Testis (tissue), 5 donors: ENCODE measurements at regions of chr20 and their contacts with region 1.

Region 1: DNA sequence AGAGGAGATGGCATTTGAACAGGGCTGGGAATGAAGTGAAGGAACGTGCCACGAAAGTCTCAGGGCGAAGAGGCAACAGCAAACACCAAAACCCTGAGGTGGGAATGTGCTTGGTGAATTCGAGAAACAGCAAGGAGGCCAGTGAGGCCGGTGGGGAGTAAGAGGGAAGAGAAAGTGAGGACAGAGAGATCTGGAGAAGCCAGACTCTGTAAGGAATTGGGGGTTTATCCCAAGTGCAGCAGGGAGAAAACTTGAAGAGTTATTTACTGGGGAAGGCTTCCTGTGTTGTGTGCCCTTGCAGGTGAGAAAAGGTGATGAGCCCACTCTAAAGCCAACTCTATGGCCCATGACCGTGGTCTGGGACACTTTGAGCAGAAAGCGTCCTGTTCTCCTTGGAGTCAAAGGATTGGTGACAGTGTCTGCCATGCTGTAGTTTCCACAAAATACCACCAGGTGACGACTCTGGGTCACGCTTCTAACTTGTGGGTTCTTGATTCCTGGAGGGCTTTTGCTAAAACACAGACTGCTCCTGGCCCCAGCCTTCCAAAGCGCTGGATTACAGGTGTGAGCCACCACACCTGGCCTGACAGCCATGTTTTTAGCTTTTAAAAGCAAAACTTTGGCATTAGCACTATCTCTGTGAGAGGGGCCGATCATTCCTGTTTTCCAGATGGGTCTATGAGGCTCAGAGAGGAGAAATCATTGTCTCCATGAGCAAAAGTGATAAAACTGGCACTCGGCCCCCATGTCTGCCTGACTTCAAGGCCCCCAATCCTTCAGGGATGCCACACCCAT is 18.0 kb upstream of the CSNK2A1 start:
- DNase-seq: peak; percentile 80
- H3K4me3 ChIP-seq: no peak overlapping the region
- H3K27ac ChIP-seq: no peak overlapping the region
- H3K4me1 ChIP-seq: no peaks in the 10 kb centered on the region
- H3K27me3 ChIP-seq: no peaks in the 10 kb centered on the region
- CTCF ChIP-seq: peak; percentile 84 to 97 (median 97)
- POLR2A ChIP-seq: no peak

Region 2: GRCh38 chr20:117518-117917 is 444.1 kb before region 1 on chr20:
- intact Hi-C with region 1: no loop called
- DNase-seq: no peak
- H3K4me3 ChIP-seq: no peak overlapping the region
- H3K27ac ChIP-seq: no peak overlapping the region
- H3K4me1 ChIP-seq: no peaks in the 10 kb centered on the region
- H3K27me3 ChIP-seq: no peaks in the 10 kb centered on the region
- CTCF ChIP-seq: no peak
- POLR2A ChIP-seq: no peak

Region 3: GRCh38 chr20:645318-646106 is 83.9 kb after region 1 on chr20:
- intact Hi-C with region 1: loop called (anchors 5 kb)
- DNase-seq: peak; percentile 82
- H3K4me3 ChIP-seq: no peak overlapping the region
- H3K27ac ChIP-seq: no peak overlapping the region
- H3K4me1 ChIP-seq: peaks cover 4% of the 10 kb centered on the region
- H3K27me3 ChIP-seq: no peaks in the 10 kb centered on the region
- CTCF ChIP-seq: peak; percentile 72 to 92 (median 92)
- POLR2A ChIP-seq: no peak

Region 4: GRCh38 chr20:728248-728944 is 166.8 kb after region 1 on chr20:
- intact Hi-C with region 1: loop called (anchors 10 kb)
- DNase-seq: peak; percentile 63
- H3K4me3 ChIP-seq: peak overlapping the region; percentile 51 to 54
- H3K27ac ChIP-seq: peak overlapping the region in 1 of 2 donors; percentile 53
- H3K4me1 ChIP-seq: peaks cover 8% of the 10 kb centered on the region
- H3K27me3 ChIP-seq: no peaks in the 10 kb centered on the region
- CTCF ChIP-seq: peak in 2 of 3 experiments; percentile 57 to 65
- POLR2A ChIP-seq: no peak